ENCODE measurements at regions of chr22 and their contacts with region 1.

Region 1: DNA sequence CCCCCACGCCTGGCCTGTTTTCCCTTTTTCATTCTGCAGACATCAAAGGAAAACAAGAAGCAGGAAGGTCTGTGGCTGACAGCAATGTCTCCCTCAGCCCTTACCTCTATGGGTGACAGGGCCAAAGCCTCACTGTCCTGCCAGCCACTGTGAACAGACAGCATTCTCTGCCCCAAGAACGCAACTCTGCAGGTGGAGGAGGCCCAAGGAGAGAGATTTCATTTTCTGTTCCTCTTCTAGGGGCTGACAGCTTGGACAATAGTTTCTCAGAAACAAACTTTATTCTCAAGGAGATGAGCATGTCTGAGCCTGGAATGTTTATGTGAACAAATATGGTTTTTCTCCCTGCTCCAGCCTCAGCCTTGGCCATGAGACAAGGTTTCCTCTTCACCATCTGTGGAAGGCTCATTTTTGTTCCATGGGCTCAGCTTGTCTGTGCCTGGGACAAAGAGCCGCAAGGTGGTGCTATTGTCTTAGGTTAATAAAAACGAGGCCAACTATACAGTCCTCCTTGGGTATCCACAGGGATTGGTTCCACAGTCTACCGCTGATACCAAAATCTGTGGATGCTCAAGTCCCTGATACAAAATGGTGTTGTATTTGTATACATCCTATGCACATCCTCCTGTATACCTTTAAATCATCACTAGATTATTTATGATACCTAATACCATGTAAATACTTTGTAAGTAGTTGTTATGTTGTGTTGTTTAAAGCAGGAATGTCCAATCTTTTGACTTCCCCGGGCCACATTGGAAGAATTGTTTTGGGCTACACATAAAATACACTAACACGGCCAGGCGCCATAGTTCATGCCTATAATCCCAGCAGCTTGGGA is 5.8 kb downstream of the PIWIL3 start:
- DNase-seq: peak; percentile 76
- H3K4me3 ChIP-seq: no peak overlapping the region
- H3K27ac ChIP-seq: no peak overlapping the region
- H3K4me1 ChIP-seq: no peaks in the 10 kb centered on the region
- H3K27me3 ChIP-seq: no peaks in the 10 kb centered on the region
- CTCF ChIP-seq: peak; percentile 48

Region 2: DNA sequence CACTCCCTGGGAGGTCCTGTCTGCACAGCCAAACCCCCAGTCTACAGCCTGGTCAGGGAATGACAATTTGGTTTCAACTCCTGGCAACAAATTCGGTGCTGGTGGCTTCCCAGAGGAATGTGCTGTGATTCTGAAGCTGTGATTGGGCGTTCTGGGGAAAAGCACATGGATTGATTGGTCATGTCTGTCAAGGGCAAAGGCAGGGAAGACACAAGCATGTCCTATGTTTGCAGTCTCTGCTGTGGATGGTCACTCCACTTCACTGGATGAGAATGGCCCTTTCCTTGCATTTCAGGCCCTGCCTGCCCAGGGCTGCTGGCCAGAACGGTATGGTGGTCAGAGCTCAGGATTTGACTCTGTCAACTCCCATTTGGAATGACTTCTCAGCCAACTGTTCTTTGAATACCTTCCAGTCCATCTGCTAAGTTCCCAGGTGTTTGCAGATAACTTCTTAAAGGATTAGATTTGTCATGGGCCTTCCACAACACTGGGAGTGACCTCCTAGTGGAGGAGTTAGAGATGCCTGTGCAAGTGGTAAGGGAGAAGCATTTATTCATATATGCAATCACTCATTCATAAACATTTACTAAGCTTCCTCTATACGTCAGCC is 79.9 kb after region 1 on chr22:
- intact Hi-C with region 1: loop called (anchors 1 kb)
- DNase-seq: no peak
- H3K4me3 ChIP-seq: no peak overlapping the region
- H3K27ac ChIP-seq: no peak overlapping the region
- H3K4me1 ChIP-seq: no peaks in the 10 kb centered on the region
- H3K27me3 ChIP-seq: no peaks in the 10 kb centered on the region
- CTCF ChIP-seq: no peak

Region 3: GRCh38 chr22:24938741-24939341 is 170.1 kb after region 1 on chr22:
- intact Hi-C with region 1: loop called (anchors 10 kb)
- DNase-seq: peak; percentile 48
- H3K4me3 ChIP-seq: no peak overlapping the region
- H3K27ac ChIP-seq: no peak overlapping the region
- H3K4me1 ChIP-seq: no peaks in the 10 kb centered on the region
- H3K27me3 ChIP-seq: no peaks in the 10 kb centered on the region
- CTCF ChIP-seq: peak; percentile 74